ENCODE measurements at regions of chr1 and their contacts with region 1.

Region 1: DNA sequence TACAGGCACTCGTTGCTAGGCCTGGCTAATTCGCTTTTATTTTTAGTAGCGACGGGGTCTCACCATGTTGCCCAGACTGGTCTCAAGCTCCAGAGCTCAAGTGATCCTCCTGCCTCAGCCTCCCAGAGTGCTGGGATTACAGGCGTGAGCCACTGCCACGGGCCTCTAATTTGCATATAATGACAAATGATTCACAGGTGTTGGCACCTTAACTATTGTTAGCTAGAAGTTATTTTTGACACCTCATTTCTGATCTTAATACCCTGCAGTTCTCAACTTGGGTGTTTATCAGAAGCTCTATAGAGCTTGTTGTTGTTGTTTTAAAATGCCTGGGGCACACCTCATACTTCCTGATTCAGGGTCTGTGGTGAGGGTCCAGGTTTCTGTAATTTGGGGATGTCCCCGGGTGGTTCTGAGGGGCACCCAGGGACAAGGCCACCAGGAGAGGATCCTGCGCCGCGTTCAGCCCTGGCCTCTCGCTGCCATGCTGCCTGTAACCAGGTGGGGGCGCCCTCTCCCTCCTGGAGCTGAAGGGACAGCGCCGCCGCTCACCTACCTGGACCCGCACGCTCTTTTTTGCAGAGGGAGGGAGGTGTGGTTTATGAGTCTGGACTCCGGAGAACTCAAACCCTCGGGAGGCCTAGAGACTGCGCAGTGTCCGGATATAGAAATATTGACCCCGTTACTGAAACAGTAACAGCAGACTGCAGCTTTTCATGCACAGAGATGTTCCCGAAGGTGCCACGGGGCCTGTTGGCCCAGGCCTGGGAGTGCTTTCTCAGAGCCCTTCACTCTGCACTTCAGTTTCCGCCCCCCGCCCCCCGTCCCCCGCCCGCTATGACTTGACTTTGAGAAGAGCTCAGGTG is 23.0 kb upstream of the NEK2 start:
- DNase-seq: peak; percentile 90
- ATAC-seq: peak; percentile 95
- H3K4me3 Mint-ChIP-seq: peak overlapping the region; percentile 32
- H3K27ac Mint-ChIP-seq: peak overlapping the region; percentile 31
- H3K4me1 Mint-ChIP-seq: peaks cover 50% of the 10 kb centered on the region
- H3K27me3 Mint-ChIP-seq: peaks cover 3% of the 10 kb centered on the region

Region 2: DNA sequence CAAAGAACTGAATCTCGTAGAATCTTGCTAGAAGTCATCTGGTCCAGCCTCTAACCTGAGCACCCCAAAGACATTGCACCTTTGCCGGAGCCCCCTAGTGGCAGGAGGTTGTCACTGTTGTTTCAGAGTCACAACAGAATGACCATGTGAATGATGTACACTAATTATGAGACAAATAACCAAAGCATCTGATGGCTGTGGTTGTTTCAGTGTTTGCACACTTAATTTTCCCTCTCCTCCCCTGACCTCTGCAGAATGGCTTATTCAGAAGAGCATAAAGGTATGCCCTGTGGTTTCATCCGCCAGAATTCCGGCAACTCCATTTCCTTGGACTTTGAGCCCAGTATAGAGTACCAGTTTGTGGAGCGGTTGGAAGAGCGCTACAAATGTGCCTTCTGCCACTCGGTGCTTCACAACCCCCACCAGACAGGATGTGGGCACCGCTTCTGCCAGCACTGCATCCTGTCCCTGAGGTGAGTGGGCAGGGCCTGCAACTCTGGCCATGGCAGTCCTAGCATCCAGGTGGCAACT is 345.3 kb before region 1 on chr1:
- CTCF ChIA-PET with region 1: no interaction called
- POLR2A ChIA-PET with region 1: no interaction called
- DNase-seq: peak; percentile 68
- ATAC-seq: peak; percentile 73
- H3K4me3 Mint-ChIP-seq: peak overlapping the region; percentile 74
- H3K27ac Mint-ChIP-seq: peak overlapping the region; percentile 93
- H3K4me1 Mint-ChIP-seq: peaks cover 50% of the 10 kb centered on the region
- H3K27me3 Mint-ChIP-seq: no peaks in the 10 kb centered on the region

Region 3: GRCh38 chr1:211680752-211681327 is 17.6 kb before region 1 on chr1:
- CTCF ChIA-PET with region 1: interaction called, 142 read pairs
- POLR2A ChIA-PET with region 1: interaction called, 5 read pairs
- DNase-seq: peak; percentile 85
- ATAC-seq: peak; percentile 90
- H3K4me3 Mint-ChIP-seq: no peak overlapping the region
- H3K27ac Mint-ChIP-seq: peak overlapping the region; percentile 11
- H3K4me1 Mint-ChIP-seq: peaks cover 13% of the 10 kb centered on the region
- H3K27me3 Mint-ChIP-seq: peaks cover 3% of the 10 kb centered on the region

Region 4: DNA sequence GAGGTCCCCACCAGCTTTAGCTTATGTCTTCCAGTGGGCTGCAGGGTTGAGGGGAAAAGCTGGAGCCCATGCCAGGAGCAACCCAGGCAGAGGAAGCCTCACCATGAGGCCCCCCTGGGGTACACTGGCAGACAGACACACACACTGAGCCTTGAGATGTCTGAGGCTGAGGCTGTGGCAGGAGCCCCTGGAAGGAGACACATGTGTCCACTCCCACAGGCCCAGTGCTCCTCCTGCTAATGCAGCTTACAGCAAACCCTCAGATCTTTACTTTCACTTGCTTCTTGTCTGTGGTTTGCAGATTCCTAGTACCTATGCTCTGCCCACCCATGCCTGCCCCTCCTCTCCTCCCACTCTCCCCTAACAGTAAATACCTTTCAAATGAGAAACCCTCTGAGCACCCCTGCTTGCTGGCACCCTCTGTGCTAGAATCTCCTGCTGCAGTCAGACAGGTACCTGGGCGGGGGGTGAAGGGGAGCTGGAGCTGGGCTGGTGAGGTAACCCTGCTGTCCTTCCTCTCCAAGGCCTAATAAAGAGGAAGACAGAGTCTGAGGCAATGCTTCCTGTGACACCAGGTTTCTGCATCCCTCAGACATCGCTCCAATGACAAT is 40.4 kb after region 1 on chr1:
- CTCF ChIA-PET with region 1: interaction called, 30 read pairs
- POLR2A ChIA-PET with region 1: no interaction called
- DNase-seq: peak; percentile 63
- ATAC-seq: peak; percentile 82
- H3K4me3 Mint-ChIP-seq: peak overlapping the region; percentile 62
- H3K27ac Mint-ChIP-seq: peak overlapping the region; percentile 88
- H3K4me1 Mint-ChIP-seq: peaks cover 42% of the 10 kb centered on the region
- H3K27me3 Mint-ChIP-seq: no peaks in the 10 kb centered on the region

Region 5: GRCh38 chr1:211814313-211814712 is 115.9 kb after region 1 on chr1:
- CTCF ChIA-PET with region 1: interaction called, 19 read pairs
- POLR2A ChIA-PET with region 1: no interaction called
- DNase-seq: no peak
- ATAC-seq: no peak
- H3K4me3 Mint-ChIP-seq: no peak overlapping the region
- H3K27ac Mint-ChIP-seq: no peak overlapping the region
- H3K4me1 Mint-ChIP-seq: no peaks in the 10 kb centered on the region
- H3K27me3 Mint-ChIP-seq: no peaks in the 10 kb centered on the region

Region 6: DNA sequence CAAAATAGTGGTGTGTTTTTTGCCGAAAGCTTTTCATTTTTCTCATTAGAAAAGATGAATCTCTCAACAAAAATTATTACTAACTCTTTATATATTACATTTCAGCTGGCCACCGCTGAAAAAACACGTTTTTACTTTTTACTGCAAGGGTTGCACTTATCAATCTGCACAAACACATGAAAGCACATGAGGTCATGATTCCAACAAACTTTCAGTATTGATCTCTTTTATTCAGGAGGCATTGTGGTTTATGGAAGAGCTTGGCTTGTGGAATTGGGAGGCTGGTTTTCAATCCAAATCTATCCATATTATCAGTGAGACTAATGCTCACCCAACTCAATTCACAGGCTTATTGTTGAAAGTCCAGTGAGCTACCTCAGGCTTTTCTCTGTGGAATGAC is 152.8 kb after region 1 on chr1:
- CTCF ChIA-PET with region 1: interaction called, 10 read pairs
- POLR2A ChIA-PET with region 1: no interaction called
- DNase-seq: no peak
- ATAC-seq: no peak
- H3K4me3 Mint-ChIP-seq: no peak overlapping the region
- H3K27ac Mint-ChIP-seq: no peak overlapping the region
- H3K4me1 Mint-ChIP-seq: no peaks in the 10 kb centered on the region
- H3K27me3 Mint-ChIP-seq: peaks cover 9% of the 10 kb centered on the region

Region 7: GRCh38 chr1:212035123-212035834 is 336.9 kb after region 1 on chr1 and contains the starts of genes DTL and INTS7:
- CTCF ChIA-PET with region 1: interaction called, 59 read pairs
- POLR2A ChIA-PET with region 1: interaction called, 7 read pairs
- DNase-seq: peak; percentile 100
- ATAC-seq: peak; percentile 87
- H3K4me3 Mint-ChIP-seq: peak within 1 kb of the TSS; percentile 98
- H3K27ac Mint-ChIP-seq: peak within 1 kb of the TSS; percentile 99
- H3K4me1 Mint-ChIP-seq: peaks cover 56% of the 10 kb centered on the region
- H3K27me3 Mint-ChIP-seq: no peaks in the 10 kb centered on the region
- total RNA-seq, gene DTL: 74.1 to 77.5 TPM
- total RNA-seq, gene INTS7: 31.8 to 32.1 TPM